Caco-2 (cell line): ENCODE measurements at regions of chr9 and their contacts with region 1.

Region 1: DNA sequence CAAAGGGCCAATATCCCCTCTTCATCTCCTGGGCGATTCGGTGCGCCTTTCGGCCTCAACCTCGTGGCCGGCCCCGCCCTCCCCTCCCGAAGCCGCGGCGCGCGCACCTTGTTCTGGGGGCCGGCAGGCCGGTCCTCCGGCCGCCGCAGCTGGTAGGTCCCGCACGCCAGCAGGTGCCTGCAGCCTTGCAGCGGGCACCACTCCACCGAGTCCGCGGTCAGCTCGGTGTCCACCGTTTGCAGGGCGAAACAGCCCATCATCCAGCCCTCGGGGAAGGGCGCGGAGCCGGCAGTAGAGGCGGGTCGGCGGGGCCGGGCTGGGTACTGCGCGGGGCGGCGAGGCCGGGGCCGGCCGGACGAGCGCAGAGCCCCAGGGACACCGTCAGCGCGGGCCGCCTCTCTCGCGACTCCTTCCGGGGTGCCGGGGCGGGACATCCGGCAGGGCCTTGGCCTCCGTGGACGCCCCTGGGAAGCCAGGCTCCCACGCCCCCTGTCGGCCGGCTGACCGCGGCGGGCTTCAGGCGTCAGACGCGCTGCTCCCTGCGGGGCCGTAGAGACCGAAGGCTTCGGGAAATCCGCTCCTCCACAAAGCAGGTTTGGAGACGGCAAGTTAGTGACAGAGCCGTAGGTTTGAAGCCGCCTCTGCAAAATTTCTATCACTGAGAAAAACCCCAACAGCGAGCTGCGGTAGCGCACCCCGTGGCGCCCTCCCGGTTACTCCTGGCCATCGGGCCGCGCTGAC is at the start of gene DPH7:
- DNase-seq: peak; percentile 94 to 98
- H3K4me3 ChIP-seq: peak within 1 kb of the TSS; percentile 96
- H3K4me3 Mint-ChIP-seq: peak within 1 kb of the TSS; percentile 83
- H3K27ac Mint-ChIP-seq: peak within 1 kb of the TSS; percentile 66
- H3K4me1 ChIP-seq: peaks cover 13% of the 10 kb centered on the region
- H3K4me1 Mint-ChIP-seq: no peaks in the 10 kb centered on the region
- H3K27me3 ChIP-seq: no peaks in the 10 kb centered on the region
- H3K27me3 Mint-ChIP-seq: no peaks in the 10 kb centered on the region
- CTCF ChIP-seq: peak; percentile 90 to 94
- total RNA-seq, gene DPH7: 51.9 and 58.4 TPM in 2 replicates

Region 2: DNA sequence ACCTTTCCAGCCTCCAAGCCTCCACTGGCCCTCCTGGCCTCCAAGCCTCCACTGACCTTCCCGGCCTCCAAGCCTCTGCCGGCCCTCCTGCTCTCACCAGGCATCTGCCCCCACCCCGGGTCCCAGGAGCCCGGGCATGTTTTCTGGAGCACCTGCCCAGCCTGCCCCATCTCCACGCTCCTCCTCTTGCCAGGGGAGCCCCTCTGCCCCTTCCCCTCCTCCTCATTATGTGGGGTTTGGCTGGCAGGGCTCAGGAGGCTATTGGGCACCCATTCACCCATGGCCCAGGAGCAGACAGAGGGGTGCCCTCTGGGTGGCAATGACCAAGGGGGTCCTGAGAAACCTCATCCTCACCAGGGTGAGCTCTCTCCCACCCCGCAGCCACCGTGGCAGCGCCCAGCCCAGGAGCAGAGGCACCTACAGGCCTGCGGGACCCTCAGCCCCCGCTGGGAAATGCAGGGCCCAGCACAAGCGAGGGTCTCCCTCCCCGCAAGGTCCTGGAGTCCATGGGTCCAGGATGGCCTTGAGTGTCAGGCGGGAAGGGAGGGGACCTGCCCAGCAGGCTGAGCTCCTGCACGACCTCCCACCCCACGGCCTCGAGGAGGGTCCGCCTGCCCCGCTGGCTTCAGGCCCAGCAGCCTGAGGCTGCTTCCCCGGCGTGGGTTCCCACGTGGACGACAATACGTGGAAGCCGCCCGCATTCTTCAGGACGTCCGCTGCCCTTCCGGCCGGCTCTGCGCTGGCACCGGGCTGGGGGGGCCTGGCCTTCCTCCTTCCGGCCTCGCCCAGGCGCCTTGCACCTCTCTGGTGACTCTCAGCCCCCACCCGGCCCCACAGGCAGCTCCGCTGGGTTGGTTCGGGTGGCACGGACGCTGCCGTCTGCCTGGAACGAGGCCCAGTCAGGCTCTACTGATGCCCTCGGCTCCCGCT is 225.2 kb before region 1 on chr9:
- CTCF ChIA-PET with region 1: no interaction called
- POLR2A ChIA-PET with region 1: no interaction called
- intact Hi-C with region 1: no loop called
- DNase-seq: no peak
- H3K4me3 ChIP-seq: no peak overlapping the region
- H3K4me3 Mint-ChIP-seq: no peak overlapping the region
- H3K27ac Mint-ChIP-seq: no peak overlapping the region
- H3K4me1 ChIP-seq: no peaks in the 10 kb centered on the region
- H3K4me1 Mint-ChIP-seq: no peaks in the 10 kb centered on the region
- H3K27me3 ChIP-seq: no peaks in the 10 kb centered on the region
- H3K27me3 Mint-ChIP-seq: no peaks in the 10 kb centered on the region
- CTCF ChIP-seq: no peak

Region 3: GRCh38 chr9:137534256-137535117 is 44.2 kb before region 1 on chr9:
- CTCF ChIA-PET with region 1: interaction called, 3 read pairs
- POLR2A ChIA-PET with region 1: no interaction called
- intact Hi-C with region 1: loop called (anchors 1 kb)
- DNase-seq: peak; percentile 72 to 77
- H3K4me3 ChIP-seq: no peak overlapping the region
- H3K4me3 Mint-ChIP-seq: peak overlapping the region; percentile 52
- H3K27ac Mint-ChIP-seq: peak overlapping the region; percentile 45
- H3K4me1 ChIP-seq: peaks cover 7% of the 10 kb centered on the region; the same call in 1 of the 2 replicates
- H3K4me1 Mint-ChIP-seq: peaks cover 7% of the 10 kb centered on the region
- H3K27me3 ChIP-seq: no peaks in the 10 kb centered on the region
- H3K27me3 Mint-ChIP-seq: no peaks in the 10 kb centered on the region
- CTCF ChIP-seq: peak; percentile 60 to 75

Region 4: DNA sequence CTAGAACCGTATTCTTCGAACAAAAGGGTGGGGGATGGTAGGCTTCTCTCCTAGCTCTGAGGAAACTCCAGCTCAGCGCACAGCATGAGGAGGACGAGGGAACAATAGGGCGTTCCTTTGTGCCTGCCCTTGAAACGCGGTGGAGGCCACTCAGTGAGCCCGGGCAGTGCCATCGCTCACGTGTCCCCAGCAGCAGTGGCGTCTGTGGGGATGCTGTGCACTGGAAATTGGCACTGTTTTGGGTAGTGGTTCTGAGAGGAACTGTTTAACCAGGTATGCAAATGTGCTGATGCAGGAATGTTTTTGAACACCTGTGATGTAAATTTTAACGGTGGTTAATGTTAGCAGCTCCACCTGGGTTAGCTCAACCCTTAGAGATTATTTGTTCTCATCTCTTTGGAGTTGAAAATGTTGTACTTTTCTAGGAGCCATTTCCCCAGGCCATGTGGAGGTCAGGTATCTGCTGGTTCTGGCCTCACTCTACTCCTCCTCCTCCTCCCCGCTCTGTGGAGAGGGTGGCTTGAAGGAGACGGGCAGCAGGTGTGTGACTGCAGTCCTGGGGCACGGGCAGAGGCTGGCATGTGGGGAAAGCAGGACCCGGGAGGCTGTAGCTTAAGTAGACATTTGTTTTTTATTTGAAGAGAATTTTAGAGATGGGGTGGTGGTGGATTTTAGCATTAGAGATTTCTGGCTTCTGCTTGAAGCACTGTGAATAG is 88.4 kb after region 1 on chr9:
- CTCF ChIA-PET with region 1: no interaction called
- POLR2A ChIA-PET with region 1: no interaction called
- intact Hi-C with region 1: no loop called
- DNase-seq: no peak
- H3K4me3 ChIP-seq: no peak overlapping the region
- H3K4me3 Mint-ChIP-seq: no peak overlapping the region
- H3K27ac Mint-ChIP-seq: no peak overlapping the region
- H3K4me1 ChIP-seq: no peaks in the 10 kb centered on the region
- H3K4me1 Mint-ChIP-seq: peaks cover 23% of the 10 kb centered on the region
- H3K27me3 ChIP-seq: no peaks in the 10 kb centered on the region
- H3K27me3 Mint-ChIP-seq: no peaks in the 10 kb centered on the region
- CTCF ChIP-seq: no peak